CD8-positive, alpha-beta T cell (primary cell): ENCODE measurements at regions of chr9 and their contacts with region 1.

Region 1: DNA sequence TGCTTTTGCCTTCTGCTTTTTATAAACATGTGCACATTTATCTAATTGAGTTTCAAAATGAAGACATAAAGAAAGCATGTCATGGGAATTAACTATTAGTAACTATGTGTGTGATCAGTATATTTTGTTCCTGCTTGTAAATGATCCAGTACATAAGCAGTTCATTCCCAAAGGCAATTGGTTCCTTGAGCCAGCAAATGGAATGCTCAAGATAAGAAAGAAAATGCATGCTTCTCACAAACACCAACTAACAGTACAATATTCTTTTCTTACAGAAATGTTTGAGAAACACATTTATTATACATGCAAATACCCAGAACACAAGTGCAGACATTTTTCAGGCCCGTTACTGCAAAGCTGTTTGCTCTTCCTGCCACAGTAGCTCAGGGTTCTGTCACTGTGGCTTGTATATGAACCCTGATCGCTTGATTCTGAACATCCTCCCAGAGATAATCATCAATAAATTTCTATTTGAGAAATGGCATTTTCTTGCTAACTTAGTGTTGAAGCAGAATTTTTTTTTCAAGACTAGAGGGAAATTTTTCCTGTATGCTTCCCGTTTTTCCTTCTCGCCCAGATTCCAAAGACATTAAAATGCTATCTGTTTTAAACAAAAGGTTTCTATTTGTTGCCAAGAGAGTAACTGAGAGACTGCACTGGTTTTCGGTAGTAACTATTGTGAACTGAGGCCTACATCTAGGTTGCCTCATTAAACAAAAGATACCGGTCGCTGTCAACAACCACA is 1.9 kb downstream of the GNAQ start:
- DNase-seq: peak in 3 of 9 experiments; percentile 29 to 56 (median 33)
- ATAC-seq: peak; percentile 18
- H3K4me3 ChIP-seq: peak overlapping the region; percentile 60 to 83
- H3K4me3 Mint-ChIP-seq: peak overlapping the region; percentile 93
- H3K27ac ChIP-seq: peak overlapping the region; percentile 50 to 60
- H3K27ac Mint-ChIP-seq: peak overlapping the region; percentile 93
- H3K4me1 ChIP-seq: peaks cover 41% of the 10 kb centered on the region
- H3K4me1 Mint-ChIP-seq: peaks cover 51% of the 10 kb centered on the region
- H3K27me3 ChIP-seq: no peaks in the 10 kb centered on the region
- H3K27me3 Mint-ChIP-seq: peaks cover 2% of the 10 kb centered on the region
- CTCF ChIP-seq: no peak

Region 2: GRCh38 chr9:77841739-77842386 is 187.9 kb before region 1 on chr9:
- CTCF ChIA-PET with region 1: interaction called, 3 read pairs
- POLR2A ChIA-PET with region 1: no interaction called
- intact Hi-C with region 1: loop called (anchors 1 to 2 kb)
- DNase-seq: peak in 1 of 9 experiments; percentile 24
- ATAC-seq: no peak
- H3K4me3 ChIP-seq: no peak overlapping the region
- H3K4me3 Mint-ChIP-seq: no peak overlapping the region
- H3K27ac ChIP-seq: no peak overlapping the region
- H3K27ac Mint-ChIP-seq: no peak overlapping the region
- H3K4me1 ChIP-seq: no peaks in the 10 kb centered on the region
- H3K4me1 Mint-ChIP-seq: peaks cover 15% of the 10 kb centered on the region
- H3K27me3 ChIP-seq: no peaks in the 10 kb centered on the region
- H3K27me3 Mint-ChIP-seq: no peaks in the 10 kb centered on the region
- CTCF ChIP-seq: no peak

Region 3: GRCh38 chr9:78011049-78011448 is 18.7 kb before region 1 on chr9:
- CTCF ChIA-PET with region 1: interaction called, 3 read pairs
- POLR2A ChIA-PET with region 1: no interaction called
- intact Hi-C with region 1: loop called in 1 of 2 experiments (anchors 2 kb)
- DNase-seq: no peak
- ATAC-seq: no peak
- H3K4me3 ChIP-seq: no peak overlapping the region
- H3K4me3 Mint-ChIP-seq: peak overlapping the region; percentile 13
- H3K27ac ChIP-seq: no peak overlapping the region
- H3K27ac Mint-ChIP-seq: peak overlapping the region; percentile 58
- H3K4me1 ChIP-seq: peaks cover 31% of the 10 kb centered on the region
- H3K4me1 Mint-ChIP-seq: peaks cover 61% of the 10 kb centered on the region
- H3K27me3 ChIP-seq: no peaks in the 10 kb centered on the region
- H3K27me3 Mint-ChIP-seq: no peaks in the 10 kb centered on the region
- CTCF ChIP-seq: no peak

Region 4: GRCh38 chr9:80004714-80005113 is 1975.0 kb after region 1 on chr9:
- CTCF ChIA-PET with region 1: no interaction called
- POLR2A ChIA-PET with region 1: no interaction called
- intact Hi-C with region 1: no loop called
- DNase-seq: no peak
- ATAC-seq: no peak
- H3K4me3 ChIP-seq: no peak overlapping the region
- H3K4me3 Mint-ChIP-seq: no peak overlapping the region
- H3K27ac ChIP-seq: no peak overlapping the region
- H3K27ac Mint-ChIP-seq: no peak overlapping the region
- H3K4me1 ChIP-seq: no peaks in the 10 kb centered on the region
- H3K4me1 Mint-ChIP-seq: no peaks in the 10 kb centered on the region
- H3K27me3 ChIP-seq: no peaks in the 10 kb centered on the region
- H3K27me3 Mint-ChIP-seq: no peaks in the 10 kb centered on the region
- CTCF ChIP-seq: no peak